ENCODE measurements at regions of chr5 and their contacts with region 1.

Region 1: GRCh38 chr5:140113699-140114263 is at the start of gene PURA:
- DNase-seq: peak; percentile 87 to 97
- H3K4me3 ChIP-seq: peak within 1 kb of the TSS; percentile 70 to 77
- H3K27ac ChIP-seq: peak within 1 kb of the TSS; percentile 83 to 89
- H3K4me1 ChIP-seq: peaks cover 14 to 31% of the 10 kb centered on the region in 2 donors
- H3K27me3 ChIP-seq: no peaks in the 10 kb centered on the region
- CTCF ChIP-seq: no peak
- total RNA-seq, gene PURA: 11.5 TPM

Region 2: GRCh38 chr5:139368613-139369012 is 745.2 kb before region 1 on chr5:
- intact Hi-C with region 1: no loop called
- DNase-seq: no peak
- H3K4me3 ChIP-seq: no peak overlapping the region
- H3K27ac ChIP-seq: no peak overlapping the region
- H3K4me1 ChIP-seq: no peaks in the 10 kb centered on the region
- H3K27me3 ChIP-seq: no peaks in the 10 kb centered on the region
- CTCF ChIP-seq: no peak

Region 3: DNA sequence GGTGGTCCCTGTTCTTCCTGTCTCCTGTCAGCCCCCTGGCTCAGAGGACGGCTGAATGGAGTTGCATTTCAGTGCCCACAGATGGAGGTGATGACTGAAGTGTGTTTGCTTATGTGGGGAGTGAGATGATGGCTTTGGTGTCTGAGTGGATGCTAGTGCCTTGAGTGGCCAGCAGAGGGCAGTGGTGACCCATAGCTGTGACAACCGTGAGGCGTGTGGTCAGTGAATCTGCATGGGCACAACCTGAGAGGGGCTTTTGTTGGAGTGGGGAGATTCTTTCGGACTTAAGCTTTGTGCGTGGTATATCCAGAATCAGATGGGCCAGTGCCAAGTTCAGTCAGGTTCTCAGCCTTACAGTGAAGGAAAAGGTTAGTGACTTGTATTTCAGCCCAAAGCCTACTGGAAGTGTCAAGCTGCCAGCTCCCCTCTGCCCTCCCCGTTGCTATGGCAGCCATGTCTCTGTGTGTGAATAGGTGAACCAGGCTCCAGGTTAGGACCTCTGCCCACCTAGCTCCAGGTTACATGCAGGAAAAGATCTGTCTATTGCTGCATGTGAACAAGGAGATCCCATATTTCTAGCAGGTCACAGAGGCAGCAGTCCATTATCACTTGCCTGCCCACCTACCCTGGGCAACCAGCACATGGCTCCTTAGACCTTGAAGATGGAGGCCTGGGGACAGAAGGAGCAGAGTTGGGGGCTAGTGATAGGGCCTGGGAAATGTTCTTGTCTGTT is 480.3 kb before region 1 on chr5:
- intact Hi-C with region 1: no loop called
- DNase-seq: no peak
- H3K4me3 ChIP-seq: no peak overlapping the region
- H3K27ac ChIP-seq: no peak overlapping the region
- H3K4me1 ChIP-seq: peaks cover 7 to 26% of the 10 kb centered on the region in 2 donors
- H3K27me3 ChIP-seq: no peaks in the 10 kb centered on the region
- CTCF ChIP-seq: peak; percentile 90 to 98 (median 98)

Region 4: GRCh38 chr5:140042643-140043500 is 70.9 kb before region 1 on chr5 and contains the start of gene NRG2:
- intact Hi-C with region 1: loop called (anchors 5 kb)
- DNase-seq: peak in 1 of 2 donors; percentile 87
- H3K4me3 ChIP-seq: peak within 1 kb of the TSS; percentile 76 to 85
- H3K27ac ChIP-seq: peak within 1 kb of the TSS; percentile 65 to 70
- H3K4me1 ChIP-seq: peaks cover 0 to 18% of the 10 kb centered on the region in 2 donors
- H3K27me3 ChIP-seq: no peaks in the 10 kb centered on the region
- CTCF ChIP-seq: peak; percentile 30 to 64 (median 49)
- total RNA-seq, gene NRG2: 12.8 TPM

Measured in ascending aorta (tissue), 2 donors.